Pancreas (tissue), 10 donors: ENCODE measurements at regions of chr15 and their contacts with region 1.

Region 1: GRCh38 chr15:58307313-58307961 is 124.4 kb upstream of the LIPC start:
- DNase-seq: no peak
- ATAC-seq: peak in 1 of 4 donors; percentile 11
- H3K4me3 ChIP-seq: no peak overlapping the region
- H3K27ac ChIP-seq: no peak overlapping the region
- H3K4me1 ChIP-seq: no peaks in the 10 kb centered on the region
- H3K27me3 ChIP-seq: no peaks in the 10 kb centered on the region
- CTCF ChIP-seq: no peak

Region 2: DNA sequence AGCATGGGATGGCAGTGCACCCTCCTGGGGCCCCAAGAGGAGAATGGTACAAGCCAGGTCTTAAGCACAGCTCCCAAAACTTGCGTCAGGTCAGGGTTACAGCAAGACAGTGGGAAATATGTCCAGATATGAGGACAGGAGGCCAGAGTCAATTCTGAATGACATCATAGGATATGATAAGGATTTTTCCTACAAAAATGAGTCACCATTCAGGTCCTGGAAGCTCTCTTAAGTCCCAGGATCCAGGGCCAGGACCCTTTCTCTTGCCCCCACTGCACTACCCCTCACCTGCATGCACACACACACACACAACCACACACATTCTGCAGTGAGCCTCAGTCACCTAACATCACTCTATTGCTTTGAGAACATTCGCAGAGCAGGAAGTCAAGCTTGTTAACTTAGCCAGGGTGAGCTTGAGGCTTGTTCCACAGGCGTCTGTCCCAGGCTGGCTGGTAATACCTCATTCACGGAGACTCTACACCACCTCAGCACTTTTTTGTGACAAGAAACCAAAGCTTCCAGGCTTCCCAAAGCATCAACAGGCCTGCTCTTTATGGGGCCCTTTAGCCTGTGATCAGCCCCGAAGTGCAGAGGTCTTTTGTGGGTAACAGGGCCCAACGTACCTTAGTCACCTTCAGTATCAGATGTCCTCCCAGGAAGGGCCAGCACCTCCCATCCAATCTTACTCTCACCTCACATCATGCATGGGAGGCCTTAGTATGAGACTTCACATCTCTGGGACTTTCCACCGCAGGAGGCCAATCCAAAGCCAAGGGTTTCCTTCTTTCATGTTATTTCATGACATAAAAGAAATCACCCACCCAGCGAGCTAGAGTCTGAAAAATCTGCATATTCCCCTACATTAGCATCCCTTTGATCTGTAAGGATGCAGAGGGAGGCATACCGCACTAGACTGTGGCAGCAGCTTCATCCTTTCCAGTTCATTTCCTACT is 50.4 kb after region 1 on chr15:
- intact Hi-C with region 1: no loop called
- DNase-seq: no peak
- ATAC-seq: peak in 2 of 4 donors; percentile 39 to 54
- H3K4me3 ChIP-seq: no peak overlapping the region
- H3K27ac ChIP-seq: no peak overlapping the region
- H3K4me1 ChIP-seq: no peaks in the 10 kb centered on the region
- H3K27me3 ChIP-seq: no peaks in the 10 kb centered on the region
- CTCF ChIP-seq: no peak

Region 3: DNA sequence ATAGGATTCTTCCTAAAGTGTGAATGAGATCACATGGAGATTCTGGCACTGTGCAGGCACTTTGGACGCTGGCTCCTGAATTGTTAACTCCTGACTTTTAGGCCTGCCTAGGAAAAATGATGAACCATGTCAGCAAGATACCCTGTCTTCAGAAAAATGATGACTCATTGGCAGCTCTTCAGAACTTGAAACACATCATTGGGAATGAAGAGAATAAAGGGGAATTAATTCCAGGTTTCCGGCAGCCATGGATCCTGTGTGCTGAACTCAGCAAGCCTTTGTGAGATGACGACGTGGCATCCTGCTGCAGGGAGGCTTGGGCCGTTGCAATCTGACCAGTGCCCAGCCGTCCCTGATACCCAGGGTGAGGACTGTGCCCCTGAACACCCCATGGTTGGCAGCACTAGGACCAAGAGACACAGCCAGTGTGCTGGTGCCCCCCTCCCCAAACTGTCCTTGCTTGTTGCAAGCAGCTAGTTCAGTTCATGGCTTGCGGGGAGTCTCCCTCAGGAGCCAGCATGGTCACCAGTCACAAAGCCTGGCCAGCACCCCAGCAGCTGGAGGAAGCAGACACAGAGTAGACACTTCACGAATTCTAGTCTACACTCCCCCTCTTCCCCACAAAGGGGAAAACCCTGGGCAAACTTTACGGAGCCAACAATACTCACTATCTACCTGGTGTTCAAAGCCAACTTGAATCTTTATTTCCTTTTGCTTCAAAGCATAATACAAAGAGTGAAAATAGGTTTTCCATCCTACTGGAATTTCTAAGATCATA is 116.6 kb after region 1 on chr15:
- intact Hi-C with region 1: loop called in 1 of 3 experiments (anchors 10 kb)
- DNase-seq: peak in 1 of 6 donors; percentile 44
- ATAC-seq: no peak
- H3K4me3 ChIP-seq: no peak overlapping the region
- H3K27ac ChIP-seq: no peak overlapping the region
- H3K4me1 ChIP-seq: peaks cover 0 to 11% (median 4%) of the 10 kb centered on the region in 3 donors
- H3K27me3 ChIP-seq: no peaks in the 10 kb centered on the region
- CTCF ChIP-seq: no peak